ENCODE measurements at regions of chr9 and their contacts with region 1.

Region 1: DNA sequence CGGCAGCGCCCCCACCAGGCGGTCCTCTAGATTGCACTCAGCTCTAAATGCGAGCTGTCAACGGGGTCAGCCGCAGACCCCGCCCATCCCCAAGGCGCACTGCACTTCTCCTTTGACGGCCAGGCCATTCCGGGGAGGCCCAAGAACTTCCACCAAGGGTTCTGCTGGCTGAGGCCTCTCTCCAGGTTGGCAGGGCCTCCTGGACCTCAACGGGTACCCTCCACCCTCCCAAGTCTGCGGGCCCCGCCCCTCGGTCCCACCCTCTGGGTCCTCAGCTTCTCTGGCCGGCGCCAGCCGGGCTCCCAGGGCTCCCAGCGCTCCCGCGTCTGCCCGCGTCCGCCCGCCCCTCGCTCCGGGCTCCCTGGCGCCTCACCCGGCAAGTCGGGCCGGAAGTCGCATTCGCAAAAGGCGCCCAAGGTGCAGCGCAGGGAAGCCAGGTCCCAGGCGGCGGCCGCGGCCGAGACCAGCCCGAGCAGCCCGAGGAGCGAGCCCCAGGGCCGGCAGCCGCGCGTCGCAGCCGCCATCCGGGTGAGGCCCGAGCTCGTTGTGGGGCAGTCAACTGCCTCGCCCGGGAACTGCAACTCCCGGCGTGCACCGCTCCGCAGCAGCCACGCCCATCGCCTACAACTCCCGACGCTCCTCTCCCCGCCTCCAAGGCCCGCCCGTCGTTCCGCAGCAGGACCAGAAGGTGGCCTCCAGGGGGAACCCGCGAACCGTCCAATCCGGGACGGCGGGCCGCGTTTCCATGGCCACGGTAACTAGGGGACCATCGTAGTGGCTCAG is at the start of gene TOR2A:
- DNase-seq: peak; percentile 99
- H3K4me3 Mint-ChIP-seq: peak within 1 kb of the TSS; percentile 82
- H3K27ac Mint-ChIP-seq: peak within 1 kb of the TSS; percentile 94
- H3K4me1 Mint-ChIP-seq: peaks cover 27% of the 10 kb centered on the region
- H3K27me3 Mint-ChIP-seq: no peaks in the 10 kb centered on the region
- total RNA-seq, gene TOR2A: 21.7 to 24.0 TPM

Region 2: DNA sequence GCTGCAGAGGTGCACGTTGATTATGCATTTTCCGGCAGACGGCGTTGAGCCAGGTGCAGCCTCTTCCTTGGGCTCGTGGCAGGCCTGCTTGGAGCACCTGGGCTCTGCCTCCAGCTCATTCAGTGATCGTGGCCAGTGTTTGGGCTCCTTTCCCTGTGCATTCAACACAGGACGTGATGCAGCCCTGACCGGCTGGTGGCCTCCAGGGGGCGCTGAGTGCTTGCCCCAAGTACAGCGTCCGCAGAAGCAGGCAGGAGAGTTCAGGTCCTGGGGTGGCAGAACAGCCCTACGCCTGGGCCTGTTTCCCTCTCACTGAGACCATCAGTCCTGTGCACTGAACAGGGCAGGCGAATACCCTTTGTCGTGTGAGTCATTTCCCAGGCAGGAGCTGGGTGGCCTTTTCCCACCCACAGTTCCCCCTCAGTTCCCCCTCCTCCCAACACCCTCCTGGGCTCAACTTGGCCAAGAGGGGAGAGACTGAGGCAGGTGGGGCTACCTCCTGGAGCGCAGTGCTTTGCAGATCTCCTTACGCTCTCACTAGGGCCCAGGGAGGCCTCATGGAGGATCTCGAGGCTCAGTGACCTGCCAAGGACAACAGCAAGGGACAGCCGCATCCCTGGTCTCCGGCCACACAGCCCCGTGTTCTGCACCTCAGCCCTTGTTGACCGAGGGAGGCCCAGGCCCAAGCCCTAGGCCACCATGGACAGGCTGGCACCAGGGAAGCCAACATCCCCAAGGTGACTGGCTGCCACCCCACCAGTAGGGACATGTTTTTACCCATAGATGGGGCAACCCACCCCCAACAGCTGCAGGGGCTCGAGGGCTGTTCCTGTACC is 230.8 kb before region 1 on chr9:
- CTCF ChIA-PET with region 1: interaction called, 14 read pairs
- POLR2A ChIA-PET with region 1: no interaction called
- DNase-seq: peak; percentile 85
- H3K4me3 Mint-ChIP-seq: no peak overlapping the region
- H3K27ac Mint-ChIP-seq: peak overlapping the region; percentile 77
- H3K4me1 Mint-ChIP-seq: no peaks in the 10 kb centered on the region
- H3K27me3 Mint-ChIP-seq: no peaks in the 10 kb centered on the region

Region 3: GRCh38 chr9:127608104-127608966 is 126.6 kb before region 1 on chr9:
- CTCF ChIA-PET with region 1: interaction called, 12 read pairs
- POLR2A ChIA-PET with region 1: no interaction called
- DNase-seq: peak; percentile 71
- H3K4me3 Mint-ChIP-seq: peak overlapping the region; percentile 74
- H3K27ac Mint-ChIP-seq: peak overlapping the region; percentile 54
- H3K4me1 Mint-ChIP-seq: peaks cover 31% of the 10 kb centered on the region
- H3K27me3 Mint-ChIP-seq: peaks cover 36% of the 10 kb centered on the region

Region 4: DNA sequence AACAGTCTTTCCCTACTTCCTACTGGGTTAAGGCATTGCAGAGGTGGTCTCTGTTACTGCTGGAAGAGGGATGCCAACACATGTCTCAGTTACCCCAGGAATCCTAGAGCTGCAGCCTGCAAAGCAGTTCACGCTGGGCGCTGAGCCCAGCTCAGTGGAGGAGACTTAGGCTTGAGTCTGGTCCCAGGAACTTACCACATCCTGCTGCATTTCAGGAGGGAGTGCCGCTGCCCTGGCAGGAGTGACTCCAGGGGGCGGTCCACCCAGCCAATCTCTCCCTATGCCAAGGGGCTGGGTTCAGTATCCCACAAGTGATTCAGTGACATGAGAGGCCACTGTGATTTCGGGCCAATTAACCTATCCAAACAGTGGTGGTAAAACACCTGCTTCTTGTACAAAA is 11.5 kb before region 1 on chr9:
- CTCF ChIA-PET with region 1: interaction called, 18 read pairs
- POLR2A ChIA-PET with region 1: no interaction called
- DNase-seq: no peak
- H3K4me3 Mint-ChIP-seq: no peak overlapping the region
- H3K27ac Mint-ChIP-seq: no peak overlapping the region
- H3K4me1 Mint-ChIP-seq: peaks cover 21% of the 10 kb centered on the region
- H3K27me3 Mint-ChIP-seq: no peaks in the 10 kb centered on the region

Region 5: GRCh38 chr9:127779136-127779981 is 44.4 kb after region 1 on chr9:
- CTCF ChIA-PET with region 1: interaction called, 31 read pairs
- POLR2A ChIA-PET with region 1: no interaction called
- DNase-seq: peak; percentile 56
- H3K4me3 Mint-ChIP-seq: peak overlapping the region; percentile 100
- H3K27ac Mint-ChIP-seq: peak overlapping the region; percentile 97
- H3K4me1 Mint-ChIP-seq: peaks cover 66% of the 10 kb centered on the region
- H3K27me3 Mint-ChIP-seq: no peaks in the 10 kb centered on the region

Region 6: GRCh38 chr9:127869310-127870152 is 134.6 kb after region 1 on chr9:
- CTCF ChIA-PET with region 1: interaction called, 13 read pairs
- POLR2A ChIA-PET with region 1: no interaction called
- DNase-seq: peak; percentile 84
- H3K4me3 Mint-ChIP-seq: no peak overlapping the region
- H3K27ac Mint-ChIP-seq: no peak overlapping the region
- H3K4me1 Mint-ChIP-seq: peaks cover 17% of the 10 kb centered on the region
- H3K27me3 Mint-ChIP-seq: no peaks in the 10 kb centered on the region

Measured in activated CD4-positive, alpha-beta T cell treated with anti-CD3 and anti-CD28 coated beads, Interleukin-2, amount 10 ng/mL, durations not matched to agents 7 days and 5 days (primary cell).